Calu3 (cell line): ENCODE measurements at regions of chr11 and their contacts with region 1.

Region 1: GRCh38 chr11:72222907-72223614 is 1.5 kb upstream of the INPPL1 start:
- DNase-seq: peak; percentile 95
- H3K4me3 Mint-ChIP-seq: peak overlapping the region; percentile 73
- H3K27ac Mint-ChIP-seq: peak overlapping the region; percentile 33
- H3K4me1 Mint-ChIP-seq: peaks cover 20% of the 10 kb centered on the region
- H3K27me3 Mint-ChIP-seq: peaks cover 10% of the 10 kb centered on the region
- CTCF ChIP-seq: peak; percentile 29

Region 2: GRCh38 chr11:72317982-72318381 is 94.9 kb after region 1 on chr11:
- CTCF ChIA-PET with region 1: interaction called, 10 read pairs
- intact Hi-C with region 1: no loop called
- DNase-seq: no peak
- H3K4me3 Mint-ChIP-seq: no peak overlapping the region
- H3K27ac Mint-ChIP-seq: no peak overlapping the region
- H3K4me1 Mint-ChIP-seq: peaks cover 6% of the 10 kb centered on the region
- H3K27me3 Mint-ChIP-seq: no peaks in the 10 kb centered on the region
- CTCF ChIP-seq: no peak

Region 3: DNA sequence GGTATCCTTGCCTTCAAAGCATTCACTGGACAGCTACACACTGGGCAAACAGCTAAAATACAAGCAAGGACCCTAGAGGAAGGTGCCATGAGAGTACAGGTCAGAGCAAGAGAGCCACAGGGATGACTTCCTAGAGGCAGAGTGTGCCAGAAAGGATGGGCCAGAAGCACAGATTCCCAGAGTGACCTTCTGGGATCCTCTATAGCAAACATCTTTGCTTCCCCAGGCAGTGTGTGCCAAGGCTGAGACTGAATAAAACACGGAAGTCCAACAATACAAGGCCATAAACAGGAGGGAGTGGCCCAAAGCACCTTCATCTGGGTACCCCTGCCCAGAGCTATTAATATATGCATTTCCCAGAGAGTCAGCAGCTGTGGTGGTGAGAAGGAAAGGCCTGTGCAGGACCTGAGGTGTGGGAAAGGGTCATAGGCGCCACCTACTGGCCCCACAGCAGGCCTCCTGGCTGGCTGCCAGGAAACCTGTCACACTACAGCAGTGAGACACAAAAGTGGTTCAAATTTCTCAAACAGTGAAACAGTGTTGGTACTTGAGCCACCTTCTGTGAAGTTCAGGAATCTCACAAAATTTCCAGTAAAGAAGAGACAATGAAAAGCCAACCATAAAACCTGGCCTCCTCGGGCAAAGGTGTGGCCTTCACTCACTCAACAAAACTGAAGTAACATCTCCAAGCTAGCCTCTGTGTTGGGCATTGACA is 191.0 kb after region 1 on chr11:
- CTCF ChIA-PET with region 1: interaction called, 4 read pairs
- intact Hi-C with region 1: loop called (anchors 10 kb)
- DNase-seq: peak; percentile 86
- H3K4me3 Mint-ChIP-seq: no peak overlapping the region
- H3K27ac Mint-ChIP-seq: no peak overlapping the region
- H3K4me1 Mint-ChIP-seq: peaks cover 22% of the 10 kb centered on the region
- H3K27me3 Mint-ChIP-seq: no peaks in the 10 kb centered on the region
- CTCF ChIP-seq: peak; percentile 80